B cell (primary cell): ENCODE measurements at regions of chr7 and their contacts with region 1.

Region 1: GRCh38 chr7:11006291-11006690 is 32.6 kb downstream of the PHF14 start:
- DNase-seq: no peak
- ATAC-seq: no peak
- H3K4me3 ChIP-seq: no peak overlapping the region
- H3K4me3 Mint-ChIP-seq: no peak overlapping the region
- H3K27ac ChIP-seq: no peak overlapping the region
- H3K27ac Mint-ChIP-seq: no peak overlapping the region
- H3K4me1 ChIP-seq: no peaks in the 10 kb centered on the region
- H3K4me1 Mint-ChIP-seq: peaks cover under 1% of the 10 kb centered on the region
- H3K27me3 ChIP-seq: no peaks in the 10 kb centered on the region
- H3K27me3 Mint-ChIP-seq: no peaks in the 10 kb centered on the region
- CTCF ChIP-seq: no peak

Region 2: DNA sequence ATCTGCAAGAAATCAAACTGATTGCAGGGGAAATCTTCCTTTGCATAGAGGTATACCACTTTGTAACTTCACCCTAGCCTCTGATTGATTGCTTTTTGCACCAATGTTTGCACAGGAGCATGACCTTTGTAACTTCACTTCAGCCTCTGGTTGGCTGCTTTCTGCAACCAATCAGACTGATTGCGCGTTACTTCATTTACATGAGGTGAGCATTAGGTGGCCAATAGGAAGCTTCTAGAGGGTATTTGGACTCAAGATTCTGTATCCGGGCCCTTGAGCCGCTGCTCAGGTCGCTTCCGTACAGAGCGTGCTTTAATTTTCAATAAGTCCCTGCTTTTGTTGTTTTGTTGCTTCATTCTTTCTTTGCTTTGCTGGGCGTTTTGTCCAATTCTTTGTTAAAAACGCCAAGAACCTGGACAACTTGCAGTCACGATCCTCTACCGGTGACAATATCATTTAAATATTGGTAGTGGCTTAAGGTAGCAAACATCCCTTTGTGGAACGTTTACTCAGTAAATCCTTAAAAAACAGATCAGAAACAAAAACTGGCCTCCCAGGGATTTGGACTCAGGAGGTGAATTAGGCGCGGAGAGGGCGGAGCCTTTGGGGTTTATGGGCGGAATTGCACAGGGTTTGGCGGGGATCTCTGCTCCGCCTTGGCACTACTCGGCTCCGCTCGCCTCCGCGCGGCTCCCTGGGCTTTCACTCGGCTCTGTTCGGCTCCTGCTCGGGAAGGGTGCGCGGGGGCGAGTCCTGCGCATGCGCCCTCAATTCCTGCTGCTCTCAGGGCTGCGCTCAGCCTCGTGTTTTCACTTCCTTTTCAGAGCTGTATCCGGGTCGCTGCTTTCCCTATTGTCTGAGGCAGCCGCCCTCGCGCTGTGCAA is 33.0 kb before region 1 on chr7 and contains the start of gene PHF14:
- CTCF ChIA-PET with region 1: no interaction called
- POLR2A ChIA-PET with region 1: no interaction called
- intact Hi-C with region 1: loop called (anchors 5 kb)
- DNase-seq: peak; percentile 96
- ATAC-seq: peak; percentile 95
- H3K4me3 ChIP-seq: peak within 1 kb of the TSS; percentile 71 to 97 (median 82)
- H3K4me3 Mint-ChIP-seq: peak within 1 kb of the TSS; percentile 92
- H3K27ac ChIP-seq: peak within 1 kb of the TSS; percentile 65 to 77
- H3K27ac Mint-ChIP-seq: peak within 1 kb of the TSS; percentile 93
- H3K4me1 ChIP-seq: peaks cover 20 to 27% of the 10 kb centered on the region in 2 donors
- H3K4me1 Mint-ChIP-seq: peaks cover 44% of the 10 kb centered on the region
- H3K27me3 ChIP-seq: no peaks in the 10 kb centered on the region
- H3K27me3 Mint-ChIP-seq: no peaks in the 10 kb centered on the region
- CTCF ChIP-seq: no peak
- total RNA-seq, gene PHF14: 43.7 and 45.1 TPM in 2 replicates

Region 3: DNA sequence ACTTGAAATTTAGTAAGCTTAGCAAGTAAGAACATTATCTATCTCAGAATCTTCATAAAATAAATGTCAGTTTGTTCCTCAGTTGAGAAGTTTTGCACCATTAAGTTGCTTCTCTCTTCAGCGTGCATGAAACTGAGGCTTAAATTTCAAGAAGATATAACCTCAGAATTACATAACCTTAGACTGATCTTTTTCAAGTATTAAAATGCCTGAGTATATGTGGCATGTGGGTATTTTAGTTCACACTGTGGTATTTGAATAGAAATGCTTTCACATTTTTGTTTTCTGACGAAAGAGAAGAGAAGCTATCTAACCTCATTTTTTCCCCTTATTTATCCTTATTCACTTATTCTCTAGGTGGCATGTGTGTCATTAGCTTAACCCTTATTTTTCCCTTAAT is 71.5 kb after region 1 on chr7:
- CTCF ChIA-PET with region 1: no interaction called
- POLR2A ChIA-PET with region 1: no interaction called
- intact Hi-C with region 1: no loop called
- DNase-seq: no peak
- ATAC-seq: no peak
- H3K4me3 ChIP-seq: no peak overlapping the region
- H3K4me3 Mint-ChIP-seq: no peak overlapping the region
- H3K27ac ChIP-seq: no peak overlapping the region
- H3K27ac Mint-ChIP-seq: no peak overlapping the region
- H3K4me1 ChIP-seq: no peaks in the 10 kb centered on the region
- H3K4me1 Mint-ChIP-seq: no peaks in the 10 kb centered on the region
- H3K27me3 ChIP-seq: no peaks in the 10 kb centered on the region
- H3K27me3 Mint-ChIP-seq: no peaks in the 10 kb centered on the region
- CTCF ChIP-seq: no peak